AG04450 (cell line): ENCODE measurements at regions of chr13 and their contacts with region 1.

Region 1: DNA sequence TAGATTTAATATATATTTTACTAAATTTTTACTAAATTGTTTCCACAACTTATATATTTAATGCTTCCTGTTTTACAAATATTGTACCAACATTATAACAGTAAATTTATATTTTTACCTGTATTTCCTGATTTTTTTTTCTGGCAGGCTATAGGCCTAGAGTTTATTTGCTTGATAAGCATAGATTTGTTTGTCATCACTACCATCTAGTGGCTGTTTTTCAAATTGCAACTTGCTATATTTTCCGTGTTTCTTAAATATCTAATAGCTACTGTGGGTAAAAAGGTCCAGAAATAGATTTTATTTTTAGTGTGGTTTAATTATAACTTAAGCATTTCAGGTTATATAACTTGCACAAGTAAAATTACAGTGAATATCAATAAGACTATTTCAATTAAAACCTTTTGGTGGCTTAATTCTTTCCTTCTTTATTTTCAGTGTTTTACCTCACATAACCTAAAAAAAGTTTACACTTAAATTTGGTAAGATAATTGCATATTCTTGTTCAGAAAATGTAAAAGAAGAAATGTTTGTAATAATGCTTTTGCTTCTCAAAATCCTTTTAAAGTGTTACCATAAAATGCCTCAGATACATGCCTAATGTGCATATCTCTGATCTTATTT is 60.6 kb downstream of the NDFIP2 start:
- DNase-seq: peak; percentile 46
- H3K4me3 ChIP-seq: no peak overlapping the region
- H3K27ac ChIP-seq: no peak overlapping the region
- H3K27me3 ChIP-seq: no peaks in the 10 kb centered on the region
- CTCF ChIP-seq: peak; percentile 70

Region 2: DNA sequence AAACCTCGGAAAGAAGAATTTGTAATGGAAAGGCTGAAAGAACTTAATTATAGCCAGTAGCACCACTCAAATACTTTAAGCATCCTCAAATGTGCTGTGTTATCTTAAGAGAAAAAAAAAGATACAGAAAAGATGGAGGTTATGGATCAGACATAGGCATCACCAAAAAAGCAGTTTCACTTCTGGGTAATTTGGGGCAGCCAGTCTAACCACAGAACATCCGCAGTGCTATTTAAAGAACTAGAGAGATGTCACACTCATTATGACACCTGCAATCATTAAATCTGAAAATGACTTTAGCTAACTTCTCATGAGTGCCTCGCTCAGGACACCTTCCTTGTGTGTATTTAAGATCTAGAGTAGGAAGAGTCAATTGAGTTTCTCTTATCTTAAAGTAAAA is 347.3 kb before region 1 on chr13:
- CTCF ChIA-PET with region 1: no interaction called
- POLR2A ChIA-PET with region 1: no interaction called
- DNase-seq: no peak
- H3K4me3 ChIP-seq: no peak overlapping the region
- H3K27ac ChIP-seq: no peak overlapping the region
- H3K27me3 ChIP-seq: no peaks in the 10 kb centered on the region
- CTCF ChIP-seq: no peak

Region 3: GRCh38 chr13:79393564-79394249 is 147.8 kb before region 1 on chr13:
- CTCF ChIA-PET with region 1: interaction called, 10 read pairs
- POLR2A ChIA-PET with region 1: no interaction called
- DNase-seq: no peak
- H3K4me3 ChIP-seq: no peak overlapping the region
- H3K27ac ChIP-seq: no peak overlapping the region
- H3K27me3 ChIP-seq: no peaks in the 10 kb centered on the region
- CTCF ChIP-seq: no peak

Region 4: GRCh38 chr13:79519255-79519654 is 22.3 kb before region 1 on chr13:
- CTCF ChIA-PET with region 1: interaction called, 14 read pairs
- POLR2A ChIA-PET with region 1: no interaction called
- DNase-seq: no peak
- H3K4me3 ChIP-seq: no peak overlapping the region
- H3K27ac ChIP-seq: no peak overlapping the region
- H3K27me3 ChIP-seq: no peaks in the 10 kb centered on the region
- CTCF ChIP-seq: no peak

Region 5: GRCh38 chr13:79528759-79529191 is 12.8 kb before region 1 on chr13:
- CTCF ChIA-PET with region 1: interaction called, 11 read pairs
- POLR2A ChIA-PET with region 1: no interaction called
- DNase-seq: no peak
- H3K4me3 ChIP-seq: no peak overlapping the region
- H3K27ac ChIP-seq: no peak overlapping the region
- H3K27me3 ChIP-seq: no peaks in the 10 kb centered on the region
- CTCF ChIP-seq: no peak